ENCODE measurements at regions of chr19 and their contacts with region 1.

Region 1: DNA sequence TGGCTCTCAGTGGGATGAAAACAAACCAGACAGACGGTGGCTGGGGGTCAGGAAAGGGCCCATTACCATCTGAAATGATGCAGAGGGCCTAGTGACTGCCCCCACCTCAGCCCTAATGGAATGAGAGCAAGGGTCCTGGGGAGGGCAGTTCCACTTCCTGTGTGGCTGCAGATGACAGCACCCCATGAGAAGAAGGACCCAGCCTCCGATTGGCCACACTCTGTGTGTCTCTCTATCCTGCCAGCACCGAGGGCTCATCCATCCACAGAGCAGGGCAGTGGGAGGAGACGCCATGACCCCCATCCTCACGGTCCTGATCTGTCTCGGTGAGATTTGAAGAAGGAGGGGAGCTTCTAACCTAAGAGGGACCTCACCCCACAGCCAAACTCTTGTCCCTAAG is 498 bp downstream of the LILRB1 start:
- DNase-seq: no peak
- H3K4me3 ChIP-seq: no peak overlapping the region
- H3K27ac ChIP-seq: no peak overlapping the region
- H3K4me1 ChIP-seq: no peaks in the 10 kb centered on the region
- CTCF ChIP-seq: no peak

Region 2: DNA sequence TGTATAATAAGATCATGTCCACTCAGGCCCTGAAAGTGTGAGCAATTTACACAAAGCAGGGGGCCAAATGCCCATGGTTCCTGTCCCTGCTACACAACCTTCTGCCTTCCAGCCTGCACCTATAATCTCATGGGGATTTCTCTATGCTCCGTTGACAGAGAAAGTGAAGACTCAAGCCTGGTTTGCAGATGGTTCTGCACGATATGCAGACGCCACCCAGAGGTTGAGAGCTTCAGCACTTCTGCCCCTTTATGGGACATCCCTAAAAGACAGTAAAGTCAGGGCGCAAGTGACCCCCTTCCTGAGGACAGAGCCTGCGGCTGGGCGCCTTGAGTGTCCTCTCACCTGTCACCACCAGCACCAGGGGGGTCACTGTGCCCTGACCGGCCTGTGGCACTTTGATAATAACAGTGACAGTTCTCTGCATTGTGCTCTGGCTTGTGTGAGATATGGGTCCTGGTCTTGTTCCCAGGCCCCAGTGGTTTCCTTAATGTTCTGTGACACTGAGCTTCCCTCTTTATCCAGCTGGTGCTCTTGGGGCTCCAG is 332.9 kb before region 1 on chr19:
- CTCF ChIA-PET with region 1: no interaction called
- POLR2A ChIA-PET with region 1: no interaction called
- intact Hi-C with region 1: loop called (anchors 10 kb)
- DNase-seq: peak; percentile 37
- H3K4me3 ChIP-seq: no peak overlapping the region
- H3K27ac ChIP-seq: no peak overlapping the region
- H3K4me1 ChIP-seq: no peaks in the 10 kb centered on the region
- CTCF ChIP-seq: peak; percentile 66

Region 3: GRCh38 chr19:54660306-54660705 is 29.5 kb after region 1 on chr19:
- CTCF ChIA-PET with region 1: no interaction called
- POLR2A ChIA-PET with region 1: interaction called, 12 read pairs
- intact Hi-C with region 1: no loop called
- DNase-seq: no peak
- H3K4me3 ChIP-seq: no peak overlapping the region
- H3K27ac ChIP-seq: no peak overlapping the region
- H3K4me1 ChIP-seq: peaks cover 27% of the 10 kb centered on the region
- CTCF ChIP-seq: no peak